ENCODE measurements at regions of chr7 and their contacts with region 1.

Region 1: GRCh38 chr7:107168233-107169119 is at the start of gene HBP1:
- DNase-seq: peak; percentile 95 to 99
- ATAC-seq: peak; percentile 74 to 90 (median 78)
- H3K4me3 ChIP-seq: peak within 1 kb of the TSS; percentile 96
- H3K4me3 Mint-ChIP-seq: peak within 1 kb of the TSS; percentile 95
- H3K27ac ChIP-seq: peak within 1 kb of the TSS; percentile 99
- H3K27ac Mint-ChIP-seq: peak within 1 kb of the TSS; percentile 99 to 100
- H3K4me1 ChIP-seq: peaks cover 11% of the 10 kb centered on the region
- H3K4me1 Mint-ChIP-seq: peaks cover 36 to 49% of the 10 kb centered on the region in 2 donors
- H3K27me3 ChIP-seq: no peaks in the 10 kb centered on the region
- H3K27me3 Mint-ChIP-seq: peaks cover 4% of the 10 kb centered on the region in 2 donors
- CTCF ChIP-seq: no peak
- total RNA-seq, gene HBP1: 186 to 249 (median 243) TPM

Region 2: DNA sequence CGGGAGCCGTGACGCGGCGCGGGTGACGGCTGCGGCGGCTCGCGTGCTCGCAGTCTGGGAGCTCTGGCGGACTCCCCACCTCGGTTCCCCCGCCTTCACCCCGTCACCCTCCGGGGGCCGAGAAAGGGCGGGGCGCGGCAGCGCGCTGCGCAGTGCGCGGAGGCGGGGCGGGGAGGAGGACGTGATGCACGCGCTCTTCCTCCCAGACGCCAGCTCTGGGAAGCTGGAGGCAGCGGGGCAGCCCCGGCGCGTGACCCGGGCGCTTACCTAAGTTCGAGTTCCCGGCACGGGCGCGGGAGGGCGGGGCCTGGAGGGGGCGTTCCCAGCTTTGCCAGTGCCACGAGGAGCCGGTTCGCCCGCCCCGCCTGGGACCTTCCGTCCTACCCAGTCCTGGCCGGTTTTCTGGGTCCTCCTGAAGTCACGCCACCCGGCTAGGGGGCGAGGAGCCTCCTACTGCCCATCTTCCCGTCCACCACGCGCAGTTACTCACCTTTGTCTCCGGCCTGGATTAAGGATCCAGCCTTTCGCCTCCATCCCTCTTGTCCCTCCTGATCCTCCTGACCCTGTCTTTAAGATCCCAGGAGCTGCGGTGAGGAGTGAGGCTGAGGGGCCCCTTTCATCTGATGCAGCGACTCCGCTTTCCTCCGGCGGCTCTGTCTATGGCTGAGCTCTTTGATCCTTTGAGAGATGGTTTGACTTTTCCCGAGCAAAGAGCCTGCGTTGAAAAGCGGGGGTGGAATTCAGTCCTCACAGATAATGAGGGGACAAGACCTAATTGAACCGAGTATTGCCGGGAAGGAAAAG is 883.2 kb before region 1 on chr7:
- intact Hi-C with region 1: loop called (anchors 2 kb)
- DNase-seq: peak; percentile 92 to 98
- ATAC-seq: peak; percentile 88 to 96 (median 89)
- H3K4me3 ChIP-seq: peak overlapping the region; percentile 97
- H3K4me3 Mint-ChIP-seq: peak overlapping the region; percentile 95
- H3K27ac ChIP-seq: peak overlapping the region; percentile 97
- H3K27ac Mint-ChIP-seq: peak overlapping the region; percentile 93 to 95
- H3K4me1 ChIP-seq: peaks cover 12% of the 10 kb centered on the region
- H3K4me1 Mint-ChIP-seq: peaks cover 16 to 20% of the 10 kb centered on the region in 2 donors
- H3K27me3 ChIP-seq: no peaks in the 10 kb centered on the region
- H3K27me3 Mint-ChIP-seq: peaks cover under 1 to 2% of the 10 kb centered on the region in 2 donors
- CTCF ChIP-seq: no peak

Region 3: GRCh38 chr7:106561666-106562411 is 606.6 kb before region 1 on chr7:
- intact Hi-C with region 1: no loop called
- DNase-seq: no peak
- ATAC-seq: no peak
- H3K4me3 ChIP-seq: no peak overlapping the region
- H3K4me3 Mint-ChIP-seq: no peak overlapping the region
- H3K27ac ChIP-seq: no peak overlapping the region
- H3K27ac Mint-ChIP-seq: no peak overlapping the region
- H3K4me1 ChIP-seq: no peaks in the 10 kb centered on the region
- H3K4me1 Mint-ChIP-seq: no peaks in the 10 kb centered on the region
- H3K27me3 ChIP-seq: no peaks in the 10 kb centered on the region
- H3K27me3 Mint-ChIP-seq: peaks cover 12 to 25% of the 10 kb centered on the region in 2 donors
- CTCF ChIP-seq: no peak

Region 4: DNA sequence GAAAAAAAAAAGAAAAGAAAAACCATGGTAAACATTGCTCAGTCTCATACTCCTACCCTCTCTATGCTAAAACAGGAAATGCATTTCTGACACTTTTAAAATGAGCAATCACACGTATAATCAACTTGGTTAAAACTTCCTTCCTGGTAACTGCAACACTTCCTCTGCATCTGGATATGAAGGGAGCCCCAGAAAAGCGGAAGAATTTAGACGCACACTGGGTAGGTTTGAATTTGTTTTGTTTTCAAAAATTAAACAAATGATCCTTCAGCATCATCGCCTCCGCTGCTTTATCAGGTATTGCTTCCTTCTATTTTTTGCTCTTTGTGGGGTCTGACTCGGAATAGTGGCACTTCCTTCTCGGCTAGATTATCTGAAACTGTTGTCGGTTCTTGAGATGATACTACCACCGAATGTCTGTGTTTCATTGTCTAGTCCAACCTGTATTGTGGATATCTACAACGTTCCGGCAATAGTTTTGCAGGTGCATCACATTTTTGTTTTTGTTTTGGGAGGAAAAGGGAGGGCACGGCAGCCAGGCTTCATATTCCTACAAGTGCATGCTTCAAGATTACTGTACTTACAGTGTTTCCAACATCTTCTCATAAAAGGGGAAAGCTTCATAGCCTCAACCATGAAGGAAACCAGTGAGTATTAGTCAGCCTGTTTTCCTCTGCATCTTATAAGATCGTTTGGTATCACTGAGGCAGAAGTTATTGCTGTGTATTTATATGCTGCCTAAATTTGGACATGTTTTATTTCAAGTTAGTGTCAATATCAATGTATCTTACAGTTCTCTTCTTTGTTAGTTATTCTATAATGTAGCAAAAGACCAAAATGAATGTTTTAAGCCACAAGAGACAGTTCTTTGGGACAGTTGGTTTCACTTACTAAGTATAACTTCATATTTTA is 303.1 kb before region 1 on chr7 and contains the start of gene PIK3CG:
- intact Hi-C with region 1: loop called (anchors 1 kb)
- DNase-seq: peak in 1 of 2 donors; percentile 78
- ATAC-seq: peak; percentile 85 to 94 (median 94)
- H3K4me3 ChIP-seq: peak within 1 kb of the TSS; percentile 89
- H3K4me3 Mint-ChIP-seq: peak within 1 kb of the TSS; percentile 94
- H3K27ac ChIP-seq: peak within 1 kb of the TSS; percentile 93
- H3K27ac Mint-ChIP-seq: peak within 1 kb of the TSS; percentile 92 to 97
- H3K4me1 ChIP-seq: peaks cover 43% of the 10 kb centered on the region
- H3K4me1 Mint-ChIP-seq: peaks cover 88 to 91% of the 10 kb centered on the region in 2 donors
- H3K27me3 ChIP-seq: no peaks in the 10 kb centered on the region
- H3K27me3 Mint-ChIP-seq: no peaks in the 10 kb centered on the region
- CTCF ChIP-seq: no peak
- total RNA-seq, gene PIK3CG: 64.9 to 83.3 (median 78.2) TPM

Region 5: DNA sequence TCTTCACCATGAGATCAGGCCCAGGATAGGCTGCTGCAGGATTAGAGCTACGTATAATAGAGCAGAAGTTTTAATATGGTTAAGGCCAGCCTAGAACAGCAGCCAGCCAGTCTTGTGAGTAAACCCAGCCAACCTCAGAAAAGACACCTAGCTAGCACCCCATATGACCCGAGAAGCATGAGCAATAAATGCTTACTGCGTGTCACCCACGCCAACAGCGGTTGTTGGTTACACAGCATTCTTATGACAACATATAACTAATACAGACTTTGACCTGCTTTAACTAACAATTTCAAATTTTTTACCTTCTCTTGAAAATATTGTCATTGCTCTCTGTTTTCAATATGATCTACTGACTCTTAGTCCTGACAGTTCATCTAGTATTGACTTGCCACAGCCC is 106.0 kb after region 1 on chr7:
- intact Hi-C with region 1: no loop called
- DNase-seq: no peak
- ATAC-seq: no peak
- H3K4me3 ChIP-seq: no peak overlapping the region
- H3K4me3 Mint-ChIP-seq: no peak overlapping the region
- H3K27ac ChIP-seq: no peak overlapping the region
- H3K27ac Mint-ChIP-seq: no peak overlapping the region
- H3K4me1 ChIP-seq: no peaks in the 10 kb centered on the region
- H3K4me1 Mint-ChIP-seq: no peaks in the 10 kb centered on the region
- H3K27me3 ChIP-seq: no peaks in the 10 kb centered on the region
- H3K27me3 Mint-ChIP-seq: no peaks in the 10 kb centered on the region
- CTCF ChIP-seq: no peak

Region 6: GRCh38 chr7:107754642-107755041 is 586.2 kb after region 1 on chr7:
- intact Hi-C with region 1: no loop called
- DNase-seq: peak in 1 of 2 donors; percentile 23
- ATAC-seq: no peak
- H3K4me3 ChIP-seq: no peak overlapping the region
- H3K4me3 Mint-ChIP-seq: no peak overlapping the region
- H3K27ac ChIP-seq: no peak overlapping the region
- H3K27ac Mint-ChIP-seq: peak overlapping the region in 1 of 2 donors; percentile 13
- H3K4me1 ChIP-seq: no peaks in the 10 kb centered on the region
- H3K4me1 Mint-ChIP-seq: peaks cover 24 to 31% of the 10 kb centered on the region in 2 donors
- H3K27me3 ChIP-seq: no peaks in the 10 kb centered on the region
- H3K27me3 Mint-ChIP-seq: no peaks in the 10 kb centered on the region
- CTCF ChIP-seq: no peak

Region 7: GRCh38 chr7:107890962-107891635 is 722.6 kb after region 1 on chr7 and contains the start of gene DLD:
- intact Hi-C with region 1: loop called (anchors 5 kb)
- DNase-seq: peak; percentile 94 to 97
- ATAC-seq: peak; percentile 91 to 97 (median 94)
- H3K4me3 ChIP-seq: peak within 1 kb of the TSS; percentile 75
- H3K4me3 Mint-ChIP-seq: peak within 1 kb of the TSS; percentile 97
- H3K27ac ChIP-seq: peak within 1 kb of the TSS; percentile 95
- H3K27ac Mint-ChIP-seq: peak within 1 kb of the TSS; percentile 97 to 98
- H3K4me1 ChIP-seq: peaks cover 15% of the 10 kb centered on the region
- H3K4me1 Mint-ChIP-seq: peaks cover 44 to 50% of the 10 kb centered on the region in 2 donors
- H3K27me3 ChIP-seq: no peaks in the 10 kb centered on the region
- H3K27me3 Mint-ChIP-seq: no peaks in the 10 kb centered on the region
- CTCF ChIP-seq: no peak
- total RNA-seq, gene DLD: 72.2 to 81.4 (median 80.9) TPM